Left ventricle myocardium superior (tissue), 1 donor: ENCODE measurements at regions of chr15 and their contacts with region 1.

Region 1: GRCh38 chr15:45777781-45778180 is 143.0 kb downstream of the SQOR start:
- DNase-seq: no peak
- ATAC-seq: no peak

Region 2: DNA sequence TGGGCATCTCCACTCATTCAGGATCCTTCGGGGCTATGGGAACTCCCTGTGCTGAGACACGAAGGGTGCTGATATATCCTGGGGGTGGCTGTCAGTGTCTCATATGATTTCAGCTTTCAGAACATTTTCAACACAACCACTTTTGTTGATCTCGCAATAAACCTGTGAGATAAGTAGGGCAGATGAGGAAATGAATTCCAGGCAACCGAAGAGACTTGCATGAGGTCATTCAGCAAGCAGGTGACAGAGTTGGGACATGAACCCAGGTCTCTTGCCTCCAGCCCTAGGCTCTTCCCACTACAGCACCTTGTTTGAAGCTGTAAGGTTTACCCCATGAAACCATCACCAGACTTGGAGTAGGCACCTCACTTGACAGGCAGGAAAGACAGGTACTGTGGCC is 631.4 kb before region 1 on chr15:
- intact Hi-C with region 1: no loop called
- DNase-seq: no peak
- ATAC-seq: no peak

Region 3: GRCh38 chr15:46177219-46177618 is 399.4 kb after region 1 on chr15:
- intact Hi-C with region 1: loop called (anchors 5 kb)
- DNase-seq: no peak
- ATAC-seq: no peak